Activated T-helper 2 cell treated with anti-CD3 and anti-CD28 coated beads, Interferon-gamma antibody, Interleukin-2, Interleukin-4, amounts not matched to agents 10 μg/mL and 5 μg/mL and 100 μg/mL, durations not matched to agents 14 hours and 24 hours and 36 hours (primary cell): ENCODE measurements at regions of chr17 and their contacts with region 1.

Region 1: GRCh38 chr17:52147872-52148271 is 10.6 kb downstream of the CA10 start:
- DNase-seq: no peak
- H3K4me3 Mint-ChIP-seq: no peak overlapping the region
- H3K27ac Mint-ChIP-seq: peak overlapping the region; percentile 87
- H3K4me1 Mint-ChIP-seq: peaks cover 24% of the 10 kb centered on the region
- H3K27me3 Mint-ChIP-seq: peaks cover 3% of the 10 kb centered on the region

Region 2: GRCh38 chr17:51820252-51820651 is 327.6 kb before region 1 on chr17:
- intact Hi-C with region 1: loop called (anchors 1 kb)
- DNase-seq: no peak
- H3K4me3 Mint-ChIP-seq: no peak overlapping the region
- H3K27ac Mint-ChIP-seq: peak overlapping the region; percentile 90
- H3K4me1 Mint-ChIP-seq: peaks cover 19% of the 10 kb centered on the region
- H3K27me3 Mint-ChIP-seq: no peaks in the 10 kb centered on the region

Region 3: GRCh38 chr17:52606098-52606497 is 458.2 kb after region 1 on chr17:
- intact Hi-C with region 1: no loop called
- DNase-seq: no peak
- H3K4me3 Mint-ChIP-seq: no peak overlapping the region
- H3K27ac Mint-ChIP-seq: no peak overlapping the region
- H3K4me1 Mint-ChIP-seq: no peaks in the 10 kb centered on the region
- H3K27me3 Mint-ChIP-seq: no peaks in the 10 kb centered on the region